ENCODE measurements at regions of chr22 and their contacts with region 1.

Region 1: DNA sequence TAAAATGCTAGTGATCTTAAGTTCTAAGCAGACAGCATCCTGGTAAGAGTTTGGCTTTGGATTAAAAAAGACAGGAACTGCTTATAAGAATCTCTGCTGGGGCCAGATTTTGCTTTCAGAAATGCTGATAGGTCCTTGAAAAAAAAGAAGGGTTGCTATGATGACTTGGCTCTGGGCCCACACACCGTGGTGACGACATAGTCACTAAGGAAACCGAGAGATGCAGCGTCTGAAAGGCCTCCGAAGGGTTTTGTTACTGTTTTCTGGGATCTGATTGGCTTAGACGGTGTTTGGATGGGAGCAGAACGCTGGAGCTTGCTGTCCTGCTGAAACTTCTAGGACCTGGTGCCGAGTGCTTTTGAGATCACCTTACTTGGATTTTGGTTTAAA is 8.4 kb downstream of the FAM118A start:
- DNase-seq: peak; percentile 68
- ATAC-seq: peak; percentile 78
- H3K4me3 ChIP-seq: peak overlapping the region; percentile 4; the same call in 1 of the 2 replicates
- H3K27ac ChIP-seq: peak overlapping the region; percentile 87
- H3K4me1 ChIP-seq: peaks cover 24% of the 10 kb centered on the region
- H3K27me3 ChIP-seq: no peaks in the 10 kb centered on the region
- CTCF ChIP-seq: no peak
- EP300 ChIP-seq: no peak
- POLR2A ChIP-seq: no peak
- RAD21 ChIP-seq: no peak

Region 2: DNA sequence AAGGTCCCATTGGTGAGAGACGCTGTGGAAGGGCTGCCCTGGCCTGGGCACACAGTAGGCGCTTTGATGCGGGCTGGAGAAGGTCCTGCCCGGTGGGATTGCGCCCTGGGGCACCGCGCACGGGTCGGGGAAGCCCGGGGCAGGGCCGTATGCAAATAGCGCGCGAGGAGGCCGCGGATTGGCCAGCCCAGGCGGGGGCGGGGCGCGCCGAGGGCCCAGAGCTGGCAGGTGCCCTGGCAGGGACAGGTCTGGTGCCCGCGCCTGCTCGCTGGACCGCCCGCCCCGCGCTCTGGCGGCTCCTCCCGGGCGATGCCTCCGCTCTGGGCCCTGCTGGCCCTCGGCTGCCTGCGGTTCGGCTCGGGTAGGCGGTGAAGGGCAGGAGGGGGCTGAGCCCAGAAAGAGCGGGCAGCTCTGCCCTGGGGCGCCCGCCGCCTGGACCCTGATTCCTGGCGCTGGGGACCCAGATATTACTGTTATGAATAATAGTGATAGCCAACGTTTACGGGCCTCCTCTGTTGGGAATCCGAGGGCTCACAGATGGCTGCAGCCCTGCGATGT is 33.4 kb before region 1 on chr22 and contains the start of gene UPK3A:
- CTCF ChIA-PET with region 1: no interaction called
- POLR2A ChIA-PET with region 1: no interaction called
- RAD21 ChIA-PET with region 1: no interaction called
- SMC1A ChIA-PET with region 1: interaction called, 5 read pairs
- in situ Hi-C with region 1: no loop called
- intact Hi-C with region 1: loop called (anchors 5 kb)
- DNase-seq: no peak
- ATAC-seq: peak; percentile 83
- H3K4me3 ChIP-seq: peak within 1 kb of the TSS; percentile 53
- H3K27ac ChIP-seq: no peak within 1 kb of the TSS
- H3K4me1 ChIP-seq: peaks cover 14% of the 10 kb centered on the region
- H3K27me3 ChIP-seq: no peaks in the 10 kb centered on the region; a peak in 1 of 4 replicates
- CTCF ChIP-seq: no peak
- EP300 ChIP-seq: no peak
- POLR2A ChIP-seq: no peak
- RAD21 ChIP-seq: no peak
- polyA plus RNA-seq, gene UPK3A: not detected

Region 3: DNA sequence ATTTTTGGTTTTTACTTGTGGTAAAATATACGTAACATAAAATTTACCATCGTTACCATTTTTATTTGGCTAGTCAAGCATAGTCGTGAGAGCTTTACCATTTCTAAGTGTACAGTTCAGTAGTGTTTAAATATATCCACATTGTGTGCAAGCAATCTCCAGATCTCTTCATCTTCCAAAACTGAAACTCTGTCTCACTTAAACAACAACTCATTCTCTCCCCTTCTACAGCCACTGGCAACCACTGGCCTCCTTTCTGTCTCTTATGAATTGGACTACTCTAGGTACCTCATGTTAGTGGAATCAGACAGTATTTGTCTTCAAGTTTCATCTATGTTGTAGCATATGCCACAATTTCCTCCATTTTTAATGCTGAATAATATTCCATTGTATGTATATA is 57.8 kb after region 1 on chr22:
- CTCF ChIA-PET with region 1: no interaction called
- POLR2A ChIA-PET with region 1: no interaction called
- RAD21 ChIA-PET with region 1: no interaction called
- SMC1A ChIA-PET with region 1: no interaction called
- in situ Hi-C with region 1: no loop called
- intact Hi-C with region 1: no loop called
- DNase-seq: no peak
- ATAC-seq: peak; percentile 89
- H3K4me3 ChIP-seq: no peak overlapping the region
- H3K27ac ChIP-seq: no peak overlapping the region
- H3K4me1 ChIP-seq: no peaks in the 10 kb centered on the region
- H3K27me3 ChIP-seq: no peaks in the 10 kb centered on the region
- CTCF ChIP-seq: no peak
- EP300 ChIP-seq: no peak
- POLR2A ChIP-seq: no peak
- RAD21 ChIP-seq: no peak

Region 4: DNA sequence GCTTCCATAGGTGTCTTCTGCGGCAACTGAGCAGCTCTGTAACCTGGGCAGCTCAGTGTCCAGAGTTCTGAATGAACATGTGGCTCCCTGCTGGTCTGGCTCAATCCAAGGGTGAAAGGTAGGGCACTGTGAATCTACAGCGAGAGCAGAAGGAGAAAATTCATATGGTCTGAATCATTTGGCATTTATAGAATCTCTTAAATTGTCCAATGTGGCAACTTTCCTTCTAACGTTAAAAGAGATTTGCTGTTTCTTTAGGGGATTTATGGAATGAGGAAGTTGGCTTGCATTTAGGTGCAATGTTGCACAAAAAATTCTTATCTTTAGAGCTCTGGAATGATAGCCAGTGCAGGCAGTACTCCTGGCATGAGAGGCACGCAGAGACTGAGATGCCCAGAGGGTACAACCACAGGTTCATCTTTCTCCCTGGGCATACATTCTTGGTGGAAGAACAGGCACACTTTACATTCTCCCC is 370.5 kb after region 1 on chr22:
- CTCF ChIA-PET with region 1: no interaction called
- POLR2A ChIA-PET with region 1: no interaction called
- RAD21 ChIA-PET with region 1: no interaction called
- SMC1A ChIA-PET with region 1: no interaction called
- in situ Hi-C with region 1: no loop called
- intact Hi-C with region 1: no loop called
- DNase-seq: no peak
- ATAC-seq: no peak
- H3K4me3 ChIP-seq: no peak overlapping the region
- H3K27ac ChIP-seq: no peak overlapping the region
- H3K4me1 ChIP-seq: peaks cover 11% of the 10 kb centered on the region
- H3K27me3 ChIP-seq: no peaks in the 10 kb centered on the region
- CTCF ChIP-seq: no peak
- EP300 ChIP-seq: no peak
- POLR2A ChIP-seq: no peak
- RAD21 ChIP-seq: no peak

Measured in GM12878 (cell line).